Mammary epithelial cell (primary cell): ENCODE measurements at regions of chr17 and their contacts with region 1.

Region 1: GRCh38 chr17:42039794-42040763 is 10.3 kb downstream of the C17orf113 start:
- DNase-seq: no peak
- H3K4me3 ChIP-seq: no peak overlapping the region
- H3K27ac ChIP-seq: no peak overlapping the region
- H3K4me1 ChIP-seq: peaks cover 9% of the 10 kb centered on the region
- H3K27me3 ChIP-seq: no peaks in the 10 kb centered on the region
- CTCF ChIP-seq: no peak

Region 2: DNA sequence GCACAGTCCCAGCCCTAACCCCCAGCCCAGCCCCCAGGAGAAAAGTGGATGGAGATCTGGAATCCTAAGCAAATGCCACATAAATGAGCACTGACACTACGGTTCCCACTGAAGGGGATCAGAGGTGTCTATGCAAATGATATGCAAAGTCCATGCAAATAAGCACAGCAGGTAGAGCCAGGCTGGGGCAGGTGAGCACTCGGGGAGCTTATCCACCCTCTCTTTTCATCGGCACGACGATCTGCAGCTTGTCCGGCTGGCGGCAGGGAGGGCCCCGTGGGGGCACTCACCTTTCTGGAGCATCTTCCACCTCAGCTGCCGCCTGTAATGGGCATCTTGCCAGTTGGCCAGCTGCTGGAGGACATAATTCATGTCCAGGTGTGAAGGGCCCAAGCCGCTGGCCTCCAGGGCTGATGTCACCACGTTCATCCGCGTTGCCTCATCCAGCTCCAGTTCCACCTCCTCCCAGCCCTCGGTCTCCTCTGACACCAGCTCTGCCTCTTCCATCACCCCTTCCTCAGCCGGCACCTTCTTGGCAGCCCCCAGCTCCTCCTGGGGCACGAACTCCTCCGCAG is 315.5 kb before region 1 on chr17:
- CTCF ChIA-PET with region 1: no interaction called
- dilution Hi-C with region 1: loop called (anchors 10 kb)
- in situ Hi-C with region 1: no loop called
- intact Hi-C with region 1: no loop called
- DNase-seq: no peak
- H3K4me3 ChIP-seq: no peak overlapping the region
- H3K27ac ChIP-seq: no peak overlapping the region
- H3K4me1 ChIP-seq: peaks cover 7% of the 10 kb centered on the region
- H3K27me3 ChIP-seq: no peaks in the 10 kb centered on the region
- CTCF ChIP-seq: no peak

Region 3: GRCh38 chr17:42009170-42009569 is 30.9 kb before region 1 on chr17:
- CTCF ChIA-PET with region 1: no interaction called
- dilution Hi-C with region 1: no loop called
- in situ Hi-C with region 1: no loop called
- intact Hi-C with region 1: no loop called
- DNase-seq: no peak
- H3K4me3 ChIP-seq: no peak overlapping the region
- H3K27ac ChIP-seq: no peak overlapping the region
- H3K4me1 ChIP-seq: peaks cover 24% of the 10 kb centered on the region
- H3K27me3 ChIP-seq: no peaks in the 10 kb centered on the region
- CTCF ChIP-seq: peak; percentile 20 to 31

Region 4: GRCh38 chr17:42019509-42020404 is 20.3 kb before region 1 on chr17 and contains the start of gene NKIRAS2:
- CTCF ChIA-PET with region 1: interaction called, 23 read pairs
- dilution Hi-C with region 1: no loop called
- in situ Hi-C with region 1: no loop called
- intact Hi-C with region 1: no loop called
- DNase-seq: peak; percentile 87
- H3K4me3 ChIP-seq: peak within 1 kb of the TSS; percentile 79 to 98 (median 90)
- H3K27ac ChIP-seq: peak within 1 kb of the TSS; percentile 66
- H3K4me1 ChIP-seq: peaks cover 31% of the 10 kb centered on the region
- H3K27me3 ChIP-seq: no peaks in the 10 kb centered on the region
- CTCF ChIP-seq: peak; percentile 70 to 87
- total RNA-seq, gene NKIRAS2: 28.1 to 40.2 TPM

Region 5: GRCh38 chr17:42103236-42103954 is 63.3 kb after region 1 on chr17:
- CTCF ChIA-PET with region 1: no interaction called
- dilution Hi-C with region 1: no loop called
- in situ Hi-C with region 1: no loop called
- intact Hi-C with region 1: no loop called
- DNase-seq: no peak
- H3K4me3 ChIP-seq: no peak overlapping the region
- H3K27ac ChIP-seq: no peak overlapping the region
- H3K4me1 ChIP-seq: no peaks in the 10 kb centered on the region
- H3K27me3 ChIP-seq: peaks cover 2% of the 10 kb centered on the region
- CTCF ChIP-seq: no peak